Activated T-helper 1 cell treated with anti-CD3 and anti-CD28 coated beads, Interleukin-12 subunit alpha, Interleukin-12 subunit beta, Interleukin-2, Interleukin-4 antibody, amounts not matched to agents 30 ng/mL and 10 ng/mL and 1 ng/mL, durations not matched to agents 14 hours and 24 hours and 36 hours (primary cell): ENCODE measurements at regions of chr6 and their contacts with region 1.

Region 1: DNA sequence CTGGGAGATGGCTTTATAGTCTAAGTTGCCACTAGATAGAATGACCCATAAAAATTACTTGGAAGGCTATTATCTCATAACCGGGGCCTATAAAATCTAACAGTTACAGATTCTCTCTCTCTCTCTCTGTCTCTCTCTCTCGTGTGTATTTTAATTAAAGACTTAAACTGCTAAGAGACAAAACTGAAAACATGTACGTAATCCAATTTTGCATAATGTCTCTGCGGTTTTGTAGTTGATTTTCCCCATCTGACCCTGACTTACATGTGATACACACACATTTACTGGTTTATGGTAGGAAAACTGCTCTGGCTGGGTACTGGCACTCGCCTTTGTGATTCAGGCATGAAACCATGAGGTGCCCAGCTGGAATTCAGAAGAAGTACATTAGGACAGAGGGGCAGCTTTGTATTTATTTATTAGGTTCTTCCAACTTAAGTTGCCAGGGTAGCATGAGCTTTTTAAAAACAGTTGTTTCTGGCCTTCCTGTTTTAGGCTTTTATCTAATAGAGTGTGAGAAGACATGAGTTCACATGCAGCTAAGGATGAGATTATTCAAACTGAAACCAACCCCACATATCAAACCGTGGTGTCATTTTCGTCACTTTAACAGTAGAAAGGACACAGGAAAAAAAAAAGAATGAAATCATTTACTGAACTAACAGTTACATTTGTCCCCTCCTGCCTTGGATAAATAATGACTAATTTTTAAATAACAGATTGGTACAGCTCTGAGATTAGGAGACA is 182.5 kb downstream of the GMPR start:
- DNase-seq: peak; percentile 47
- H3K4me3 Mint-ChIP-seq: peak overlapping the region; percentile 73
- H3K27ac Mint-ChIP-seq: peak overlapping the region; percentile 95
- H3K4me1 Mint-ChIP-seq: peaks cover 63% of the 10 kb centered on the region
- H3K27me3 Mint-ChIP-seq: no peaks in the 10 kb centered on the region

Region 2: DNA sequence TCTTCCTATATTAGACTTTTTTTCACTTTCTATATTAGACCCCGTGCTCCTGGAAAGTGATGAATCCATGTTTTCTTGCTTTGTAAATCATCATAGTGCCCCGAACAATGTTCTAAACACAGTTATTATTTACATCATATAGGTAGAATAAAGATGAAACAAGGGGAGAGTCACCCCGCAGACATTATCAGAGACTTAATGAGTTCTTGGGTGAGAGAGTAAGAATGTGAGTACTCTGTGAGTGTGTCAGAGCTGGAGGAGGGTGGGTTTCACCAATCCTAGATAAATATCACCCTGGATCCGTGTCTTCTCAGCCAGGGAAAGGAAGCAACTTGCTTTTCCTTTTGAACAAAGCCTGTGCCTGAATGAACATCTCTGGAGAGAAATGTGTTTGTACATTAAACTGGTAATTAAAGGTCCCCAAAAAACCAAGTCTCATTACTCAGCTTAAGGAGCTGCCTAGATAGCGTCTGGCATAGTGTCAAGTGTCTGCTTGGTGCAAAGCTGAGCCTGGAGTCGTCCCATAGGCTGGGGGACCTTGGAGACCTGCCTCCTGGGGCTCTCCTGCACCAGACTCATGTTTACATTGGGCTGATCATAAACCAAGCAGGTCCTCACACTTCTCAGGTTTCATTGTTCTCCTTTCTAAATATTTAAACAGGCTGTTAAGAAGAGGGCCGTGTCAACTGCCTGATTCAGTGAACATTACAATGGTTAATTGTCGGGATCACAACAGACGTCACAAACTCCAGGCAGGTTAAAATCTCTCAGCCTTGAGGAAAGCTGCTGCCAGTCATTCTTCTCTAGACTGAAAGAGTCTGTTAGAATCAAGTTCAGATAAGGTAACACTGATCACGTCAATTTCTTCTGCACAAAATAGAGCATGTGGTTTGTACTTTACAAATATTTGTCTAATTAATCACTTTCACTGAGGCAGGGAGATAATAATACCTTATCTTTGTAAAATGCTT is 471.7 kb before region 1 on chr6:
- intact Hi-C with region 1: no loop called
- DNase-seq: no peak
- H3K4me3 Mint-ChIP-seq: no peak overlapping the region
- H3K27ac Mint-ChIP-seq: no peak overlapping the region
- H3K4me1 Mint-ChIP-seq: peaks cover 5% of the 10 kb centered on the region
- H3K27me3 Mint-ChIP-seq: no peaks in the 10 kb centered on the region

Region 3: GRCh38 chr6:16206595-16207037 is 214.3 kb before region 1 on chr6:
- intact Hi-C with region 1: no loop called
- DNase-seq: peak; percentile 22
- H3K4me3 Mint-ChIP-seq: no peak overlapping the region
- H3K27ac Mint-ChIP-seq: no peak overlapping the region
- H3K4me1 Mint-ChIP-seq: peaks cover 6% of the 10 kb centered on the region
- H3K27me3 Mint-ChIP-seq: peaks cover 27% of the 10 kb centered on the region

Region 4: DNA sequence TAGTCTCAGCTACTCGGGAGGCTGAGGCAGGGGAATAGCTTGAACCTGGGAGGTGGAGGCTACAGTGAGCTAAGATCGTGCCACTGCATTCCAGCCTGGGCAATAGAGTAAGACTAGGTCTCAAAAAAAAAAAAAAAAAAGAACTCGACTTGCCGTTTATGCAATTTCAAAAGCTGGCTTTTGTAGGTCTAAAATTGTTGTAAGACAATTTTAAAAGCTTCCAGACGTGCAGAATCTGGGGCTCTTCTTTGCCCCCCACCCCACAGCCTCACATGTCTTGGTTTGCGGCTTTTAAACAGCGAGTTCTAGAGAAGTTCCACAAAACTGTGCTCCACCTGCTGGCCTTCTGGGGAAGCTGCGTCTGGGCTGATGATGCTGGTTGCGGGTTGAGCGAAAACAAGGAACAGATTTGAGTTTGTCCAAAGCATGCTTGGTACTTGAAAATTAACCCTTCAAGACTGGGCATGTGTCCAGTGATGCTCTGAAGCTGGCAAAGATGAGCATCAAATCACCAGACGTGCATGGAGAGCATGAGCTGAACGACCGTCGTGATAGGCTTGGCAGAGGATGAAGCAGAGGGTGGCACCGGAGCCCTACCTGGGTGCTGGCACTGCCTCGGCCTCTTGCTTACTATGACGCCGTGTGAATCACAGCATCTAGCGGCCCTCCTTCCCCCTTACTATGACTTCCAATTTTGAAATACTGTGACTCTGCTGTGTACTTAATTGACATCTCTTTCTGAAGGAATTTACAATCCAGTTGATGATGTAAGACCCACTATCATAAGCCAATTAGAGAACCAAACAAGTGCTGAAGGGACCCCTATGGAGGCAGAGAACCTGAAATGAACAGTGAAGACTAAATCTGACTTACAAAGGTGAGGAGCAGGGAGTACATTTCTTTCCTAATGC is 11.1 kb before region 1 on chr6:
- intact Hi-C with region 1: loop called (anchors 1 kb)
- DNase-seq: peak; percentile 34
- H3K4me3 Mint-ChIP-seq: no peak overlapping the region
- H3K27ac Mint-ChIP-seq: peak overlapping the region; percentile 56
- H3K4me1 Mint-ChIP-seq: peaks cover 74% of the 10 kb centered on the region
- H3K27me3 Mint-ChIP-seq: no peaks in the 10 kb centered on the region

Region 5: GRCh38 chr6:16438718-16439591 is 18.1 kb after region 1 on chr6:
- intact Hi-C with region 1: loop called (anchors 1 kb)
- DNase-seq: no peak
- H3K4me3 Mint-ChIP-seq: peak overlapping the region; percentile 51
- H3K27ac Mint-ChIP-seq: peak overlapping the region; percentile 79
- H3K4me1 Mint-ChIP-seq: peaks cover 81% of the 10 kb centered on the region
- H3K27me3 Mint-ChIP-seq: no peaks in the 10 kb centered on the region

Region 6: DNA sequence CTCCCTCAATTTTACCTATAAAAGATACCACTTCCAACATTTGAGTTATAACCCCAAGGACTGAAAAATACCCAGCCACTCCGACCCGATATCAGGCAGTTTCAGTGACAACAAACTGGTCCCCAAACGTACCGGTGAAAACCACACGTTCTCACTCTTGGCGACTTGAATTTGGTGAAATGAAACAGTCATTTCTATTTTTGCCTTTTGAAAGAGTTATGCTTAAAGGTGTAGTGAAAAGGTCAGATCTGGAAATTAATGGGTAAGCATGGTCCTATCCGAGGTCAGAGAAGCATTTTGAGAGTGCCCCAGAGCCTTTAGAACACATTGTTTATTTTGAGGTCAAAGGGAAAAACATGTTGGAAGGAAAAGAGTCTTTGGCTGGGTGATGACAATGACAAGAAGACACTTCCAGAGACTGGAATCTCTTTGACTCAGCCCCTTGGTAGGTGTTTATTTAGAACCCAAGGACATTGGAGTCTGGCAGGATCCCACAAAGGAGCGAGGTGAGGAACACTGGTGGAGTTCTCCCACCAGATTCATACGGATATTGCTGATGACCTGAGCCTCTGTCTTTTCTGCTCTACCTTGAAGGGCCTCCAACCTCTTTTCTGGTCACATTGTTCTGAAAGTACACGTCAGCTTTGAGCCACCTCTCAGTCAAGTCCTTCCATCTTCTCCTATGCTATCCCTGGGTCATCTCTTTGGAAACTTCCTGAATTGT is 52.5 kb after region 1 on chr6:
- intact Hi-C with region 1: loop called (anchors 1 kb)
- DNase-seq: peak; percentile 14
- H3K4me3 Mint-ChIP-seq: peak overlapping the region; percentile 66
- H3K27ac Mint-ChIP-seq: peak overlapping the region; percentile 93
- H3K4me1 Mint-ChIP-seq: peaks cover 82% of the 10 kb centered on the region
- H3K27me3 Mint-ChIP-seq: no peaks in the 10 kb centered on the region

Region 7: DNA sequence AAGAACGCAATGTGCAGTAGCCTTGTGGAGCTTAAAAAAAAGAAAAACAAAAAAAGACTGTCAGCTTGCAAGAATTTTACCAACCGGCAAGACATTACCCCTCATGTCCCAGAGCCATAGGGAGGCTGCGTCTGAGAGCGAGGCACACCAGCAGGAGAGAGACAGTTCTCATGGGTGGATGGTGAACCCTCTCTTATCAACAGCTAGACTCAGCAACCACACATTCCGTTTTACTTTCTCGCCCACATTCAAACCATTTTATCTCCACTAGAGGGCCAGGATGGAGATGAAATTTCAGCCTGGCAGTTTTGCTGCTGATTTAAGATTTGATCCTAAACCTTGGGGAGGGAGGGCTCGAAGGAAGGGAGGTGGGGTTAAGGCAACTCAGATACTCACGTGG is 93.4 kb after region 1 on chr6:
- intact Hi-C with region 1: loop called (anchors 1 kb)
- DNase-seq: peak; percentile 28
- H3K4me3 Mint-ChIP-seq: peak overlapping the region; percentile 45
- H3K27ac Mint-ChIP-seq: peak overlapping the region; percentile 60
- H3K4me1 Mint-ChIP-seq: peaks cover 78% of the 10 kb centered on the region
- H3K27me3 Mint-ChIP-seq: no peaks in the 10 kb centered on the region

Region 8: DNA sequence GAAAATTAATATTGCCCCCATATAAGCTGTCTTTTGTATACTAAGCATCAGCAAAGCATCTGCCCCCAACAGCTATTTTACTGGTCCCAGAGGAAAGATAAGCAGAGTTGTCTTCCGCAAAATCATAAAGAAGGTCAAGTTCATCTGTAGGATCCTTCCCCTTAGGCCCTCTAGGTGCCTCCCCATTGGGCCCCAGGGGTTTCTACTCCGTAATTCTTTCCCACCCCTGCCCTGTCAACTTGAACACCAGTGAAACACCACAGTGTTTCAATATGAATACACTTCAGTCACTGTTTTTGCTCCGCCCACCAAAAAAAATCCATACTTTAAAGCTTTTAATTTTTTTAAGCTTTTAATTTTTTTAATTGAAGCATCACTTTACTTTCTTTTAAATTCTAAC is 181.1 kb after region 1 on chr6:
- intact Hi-C with region 1: loop called (anchors 5 kb)
- DNase-seq: no peak
- H3K4me3 Mint-ChIP-seq: peak overlapping the region; percentile 28
- H3K27ac Mint-ChIP-seq: peak overlapping the region; percentile 75
- H3K4me1 Mint-ChIP-seq: peaks cover 49% of the 10 kb centered on the region
- H3K27me3 Mint-ChIP-seq: no peaks in the 10 kb centered on the region

Region 9: GRCh38 chr6:16949716-16950115 is 528.8 kb after region 1 on chr6:
- intact Hi-C with region 1: loop called (anchors 1 kb)
- DNase-seq: no peak
- H3K4me3 Mint-ChIP-seq: no peak overlapping the region
- H3K27ac Mint-ChIP-seq: no peak overlapping the region
- H3K4me1 Mint-ChIP-seq: peaks cover 25% of the 10 kb centered on the region
- H3K27me3 Mint-ChIP-seq: peaks cover 16% of the 10 kb centered on the region